PC-9 (cell line): ENCODE measurements at regions of chr2 and their contacts with region 1.

Region 1: DNA sequence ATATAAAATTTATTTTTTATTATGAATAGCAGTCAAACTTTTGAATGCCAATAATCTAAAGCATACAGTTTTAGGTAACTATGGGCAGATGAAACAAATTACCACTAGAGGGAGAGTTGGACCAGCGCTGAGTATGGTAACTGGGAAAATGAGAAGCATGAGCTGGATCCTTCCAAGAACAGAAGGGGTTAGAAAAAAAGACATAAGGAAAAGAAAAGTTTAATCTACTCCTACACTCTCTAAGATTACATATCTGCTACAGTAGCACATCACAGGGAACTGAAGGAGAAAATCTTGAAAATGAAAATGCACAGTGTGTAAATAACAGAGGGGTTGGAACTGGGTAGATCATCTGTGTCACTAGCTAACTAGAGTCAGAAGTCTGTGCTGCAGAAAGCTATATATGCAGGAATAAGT is 15.5 kb downstream of the REG3G start:
- DNase-seq: no peak
- H3K4me3 ChIP-seq: no peak overlapping the region
- H3K27ac ChIP-seq: no peak overlapping the region
- H3K4me1 ChIP-seq: no peaks in the 10 kb centered on the region
- H3K27me3 ChIP-seq: no peaks in the 10 kb centered on the region
- CTCF ChIP-seq: peak; percentile 60

Region 2: GRCh38 chr2:79083597-79084273 is 42.7 kb after region 1 on chr2:
- CTCF ChIA-PET with region 1: no interaction called
- POLR2A ChIA-PET with region 1: no interaction called
- intact Hi-C with region 1: no loop called
- DNase-seq: no peak
- H3K4me3 ChIP-seq: no peak overlapping the region
- H3K27ac ChIP-seq: no peak overlapping the region
- H3K4me1 ChIP-seq: no peaks in the 10 kb centered on the region
- H3K27me3 ChIP-seq: 0 out of 2 replicates have a peak, but pooled peaks cover 15% of the 10 kb centered on the region
- CTCF ChIP-seq: no peak

Region 3: DNA sequence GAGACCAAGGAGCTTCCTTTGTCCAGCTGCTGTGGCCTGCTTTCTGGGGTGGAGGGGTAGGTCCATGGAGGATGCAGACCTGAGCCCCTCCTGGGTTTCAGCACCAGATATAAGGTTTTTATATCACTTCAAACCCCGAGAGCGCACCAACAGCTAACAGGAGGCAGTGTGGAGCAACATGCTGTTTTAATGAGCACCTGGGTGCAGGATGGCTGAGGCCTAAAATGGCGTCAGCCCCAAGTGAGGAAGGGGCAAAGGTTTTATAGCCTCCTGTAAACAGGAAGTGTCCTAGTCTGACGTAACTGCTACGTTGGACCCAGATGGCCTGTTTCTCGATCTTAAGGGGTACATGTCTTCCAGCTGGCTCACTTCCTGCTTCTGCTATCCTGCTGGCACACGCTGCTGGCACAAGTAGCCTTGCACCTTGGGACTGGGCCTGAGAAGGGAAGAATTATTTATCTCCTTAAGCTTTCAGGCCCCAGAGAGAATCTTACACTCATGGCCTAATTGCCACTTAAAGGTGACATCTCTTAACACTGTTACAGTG is 58.2 kb after region 1 on chr2:
- CTCF ChIA-PET with region 1: no interaction called
- POLR2A ChIA-PET with region 1: no interaction called
- intact Hi-C with region 1: no loop called
- DNase-seq: no peak
- H3K4me3 ChIP-seq: no peak overlapping the region
- H3K27ac ChIP-seq: no peak overlapping the region
- H3K4me1 ChIP-seq: no peaks in the 10 kb centered on the region
- H3K27me3 ChIP-seq: peaks cover 52% of the 10 kb centered on the region
- CTCF ChIP-seq: no peak

Region 4: GRCh38 chr2:79219383-79219988 is 178.4 kb after region 1 on chr2:
- CTCF ChIA-PET with region 1: no interaction called
- POLR2A ChIA-PET with region 1: no interaction called
- intact Hi-C with region 1: loop called (anchors 2 kb)
- DNase-seq: peak; percentile 5 to 40
- H3K4me3 ChIP-seq: no peak overlapping the region
- H3K27ac ChIP-seq: no peak overlapping the region
- H3K4me1 ChIP-seq: no peaks in the 10 kb centered on the region
- H3K27me3 ChIP-seq: peaks cover 14% of the 10 kb centered on the region; the same call in 1 of the 2 replicates
- CTCF ChIP-seq: peak; percentile 86